Activated B cell treated with CpG ODN at 0.5 μM for 24 hours (primary cell): ENCODE measurements at regions of chr14 and their contacts with region 1.

Region 1: GRCh38 chr14:74612350-74613021 is 449 bp upstream of the LTBP2 start:
- DNase-seq: peak; percentile 95
- ATAC-seq: peak; percentile 89
- H3K4me3 Mint-ChIP-seq: peak overlapping the region; percentile 80
- H3K27ac Mint-ChIP-seq: no peak overlapping the region
- H3K4me1 Mint-ChIP-seq: peaks cover 42% of the 10 kb centered on the region
- H3K27me3 Mint-ChIP-seq: peaks cover 11% of the 10 kb centered on the region
- CTCF ChIP-seq: no peak

Region 2: DNA sequence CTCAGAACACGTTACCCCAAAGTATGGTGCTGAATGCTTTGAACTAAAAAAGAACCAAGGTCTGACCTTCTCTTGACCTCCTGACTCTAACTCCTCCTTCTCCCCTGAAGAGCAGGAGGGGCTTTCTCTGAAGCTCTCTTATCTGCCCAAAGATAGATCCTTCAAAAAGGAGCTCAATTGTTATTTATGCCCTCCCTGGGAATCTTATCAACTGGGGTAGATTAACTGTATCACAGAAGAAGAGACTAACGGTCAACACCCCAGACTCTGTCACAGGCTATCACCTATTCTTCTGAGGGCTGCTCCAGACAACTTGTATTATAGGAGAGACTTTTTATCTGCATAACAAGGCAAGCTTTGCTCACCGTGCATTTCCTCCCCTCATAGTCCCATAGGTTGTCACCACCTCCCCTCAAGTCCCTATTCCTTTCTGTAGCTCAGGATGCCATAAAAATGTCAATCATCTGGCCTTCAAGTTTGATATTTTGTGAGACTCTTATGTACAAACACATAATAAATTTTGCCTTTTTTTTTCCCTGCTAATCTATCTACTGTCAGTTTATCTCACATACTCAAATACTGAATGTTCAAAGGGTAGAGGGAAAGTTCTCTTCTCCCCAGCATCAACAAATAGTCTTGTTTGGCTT is 1288.5 kb before region 1 on chr14:
- CTCF ChIA-PET with region 1: no interaction called
- POLR2A ChIA-PET with region 1: no interaction called
- intact Hi-C with region 1: no loop called
- DNase-seq: no peak
- ATAC-seq: no peak
- H3K4me3 Mint-ChIP-seq: no peak overlapping the region
- H3K27ac Mint-ChIP-seq: no peak overlapping the region
- H3K4me1 Mint-ChIP-seq: peaks cover 17% of the 10 kb centered on the region
- H3K27me3 Mint-ChIP-seq: no peaks in the 10 kb centered on the region
- CTCF ChIP-seq: no peak

Region 3: DNA sequence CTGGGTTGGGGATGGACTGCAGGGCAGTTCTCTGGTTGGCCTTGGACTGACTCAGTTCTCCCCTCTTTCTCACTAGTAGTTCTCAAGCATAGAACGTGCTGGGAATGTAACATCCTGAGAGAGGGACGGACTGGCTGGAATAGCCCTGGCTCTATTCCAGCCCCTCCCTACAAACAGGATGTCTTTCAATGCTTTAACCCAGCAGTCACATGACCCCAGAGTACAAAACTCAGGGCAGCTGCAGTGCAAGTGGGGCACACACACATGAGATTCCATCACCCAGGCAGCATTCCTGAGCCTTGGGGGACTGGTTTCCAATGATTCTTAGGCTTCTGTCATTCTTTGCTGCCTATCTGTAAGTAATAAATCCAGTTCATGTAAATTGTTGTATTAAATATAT is 1001.8 kb before region 1 on chr14:
- CTCF ChIA-PET with region 1: no interaction called
- POLR2A ChIA-PET with region 1: no interaction called
- intact Hi-C with region 1: no loop called
- DNase-seq: no peak
- ATAC-seq: no peak
- H3K4me3 Mint-ChIP-seq: no peak overlapping the region
- H3K27ac Mint-ChIP-seq: no peak overlapping the region
- H3K4me1 Mint-ChIP-seq: peaks cover 3% of the 10 kb centered on the region
- H3K27me3 Mint-ChIP-seq: peaks cover 6% of the 10 kb centered on the region
- CTCF ChIP-seq: no peak

Region 4: GRCh38 chr14:74084277-74085046 is 528.0 kb before region 1 on chr14 and contains the starts of genes ALDH6A1 and LIN52:
- CTCF ChIA-PET with region 1: no interaction called
- POLR2A ChIA-PET with region 1: no interaction called
- intact Hi-C with region 1: loop called (anchors 10 kb)
- DNase-seq: peak; percentile 94
- ATAC-seq: peak; percentile 87
- H3K4me3 Mint-ChIP-seq: peak within 1 kb of the TSS; percentile 99
- H3K27ac Mint-ChIP-seq: peak within 1 kb of the TSS; percentile 93
- H3K4me1 Mint-ChIP-seq: peaks cover 37% of the 10 kb centered on the region
- H3K27me3 Mint-ChIP-seq: no peaks in the 10 kb centered on the region
- CTCF ChIP-seq: no peak
- total RNA-seq, gene ALDH6A1: 9.8 and 11.5 TPM in 2 replicates
- total RNA-seq, gene LIN52: 7.6 and 12.4 TPM in 2 replicates

Region 5: GRCh38 chr14:74257078-74257989 is 355.2 kb before region 1 on chr14:
- CTCF ChIA-PET with region 1: no interaction called
- POLR2A ChIA-PET with region 1: no interaction called
- intact Hi-C with region 1: no loop called
- DNase-seq: peak; percentile 63
- ATAC-seq: peak; percentile 97
- H3K4me3 Mint-ChIP-seq: peak overlapping the region; percentile 81
- H3K27ac Mint-ChIP-seq: no peak overlapping the region
- H3K4me1 Mint-ChIP-seq: peaks cover 12% of the 10 kb centered on the region
- H3K27me3 Mint-ChIP-seq: peaks cover 11% of the 10 kb centered on the region
- CTCF ChIP-seq: peak; percentile 70

Region 6: DNA sequence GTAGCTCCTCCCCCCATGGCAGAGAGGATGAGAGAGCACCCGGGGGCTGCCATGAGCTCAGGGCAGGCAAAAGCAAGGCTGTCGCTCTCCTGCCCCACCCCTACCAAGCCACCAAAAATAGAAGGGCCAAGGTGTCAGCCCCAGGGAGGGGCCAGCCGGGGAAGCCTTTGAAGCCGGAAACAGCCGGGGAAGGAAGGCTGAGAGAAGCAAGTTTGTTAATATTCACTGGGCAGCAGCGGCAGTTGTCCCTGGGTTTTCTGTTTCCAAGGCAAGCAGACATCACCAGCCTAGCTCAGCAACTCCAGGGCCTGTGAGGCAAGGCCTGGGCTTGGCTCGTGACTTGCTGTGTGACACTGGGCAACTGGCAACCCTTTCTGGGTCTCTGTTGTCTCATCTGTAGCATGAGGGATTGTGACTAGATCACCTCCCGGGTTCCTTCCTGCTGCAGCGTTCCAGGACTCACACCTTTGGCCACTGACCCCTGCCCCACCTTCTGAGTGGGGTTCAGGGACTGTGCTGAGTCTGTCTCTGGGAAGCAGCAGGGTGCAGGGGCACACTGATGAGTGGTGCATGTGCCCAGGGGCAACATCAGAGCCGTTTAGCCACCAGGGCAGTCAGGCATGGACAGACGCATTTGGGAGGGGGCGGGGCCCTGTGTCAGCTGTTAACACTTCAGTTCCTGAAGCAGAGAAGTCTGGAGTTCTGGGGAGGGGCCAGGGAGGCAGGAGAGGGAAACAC is 210.8 kb before region 1 on chr14:
- CTCF ChIA-PET with region 1: no interaction called
- POLR2A ChIA-PET with region 1: no interaction called
- intact Hi-C with region 1: loop called (anchors 5 kb)
- DNase-seq: peak; percentile 74
- ATAC-seq: peak; percentile 90
- H3K4me3 Mint-ChIP-seq: peak overlapping the region; percentile 87
- H3K27ac Mint-ChIP-seq: peak overlapping the region; percentile 98
- H3K4me1 Mint-ChIP-seq: peaks cover 54% of the 10 kb centered on the region
- H3K27me3 Mint-ChIP-seq: no peaks in the 10 kb centered on the region
- CTCF ChIP-seq: no peak

Region 7: GRCh38 chr14:74542056-74542685 is 70.3 kb before region 1 on chr14:
- CTCF ChIA-PET with region 1: no interaction called
- POLR2A ChIA-PET with region 1: no interaction called
- intact Hi-C with region 1: no loop called
- DNase-seq: no peak
- ATAC-seq: no peak
- H3K4me3 Mint-ChIP-seq: no peak overlapping the region
- H3K27ac Mint-ChIP-seq: no peak overlapping the region
- H3K4me1 Mint-ChIP-seq: no peaks in the 10 kb centered on the region
- H3K27me3 Mint-ChIP-seq: peaks cover 6% of the 10 kb centered on the region
- CTCF ChIP-seq: no peak

Region 8: DNA sequence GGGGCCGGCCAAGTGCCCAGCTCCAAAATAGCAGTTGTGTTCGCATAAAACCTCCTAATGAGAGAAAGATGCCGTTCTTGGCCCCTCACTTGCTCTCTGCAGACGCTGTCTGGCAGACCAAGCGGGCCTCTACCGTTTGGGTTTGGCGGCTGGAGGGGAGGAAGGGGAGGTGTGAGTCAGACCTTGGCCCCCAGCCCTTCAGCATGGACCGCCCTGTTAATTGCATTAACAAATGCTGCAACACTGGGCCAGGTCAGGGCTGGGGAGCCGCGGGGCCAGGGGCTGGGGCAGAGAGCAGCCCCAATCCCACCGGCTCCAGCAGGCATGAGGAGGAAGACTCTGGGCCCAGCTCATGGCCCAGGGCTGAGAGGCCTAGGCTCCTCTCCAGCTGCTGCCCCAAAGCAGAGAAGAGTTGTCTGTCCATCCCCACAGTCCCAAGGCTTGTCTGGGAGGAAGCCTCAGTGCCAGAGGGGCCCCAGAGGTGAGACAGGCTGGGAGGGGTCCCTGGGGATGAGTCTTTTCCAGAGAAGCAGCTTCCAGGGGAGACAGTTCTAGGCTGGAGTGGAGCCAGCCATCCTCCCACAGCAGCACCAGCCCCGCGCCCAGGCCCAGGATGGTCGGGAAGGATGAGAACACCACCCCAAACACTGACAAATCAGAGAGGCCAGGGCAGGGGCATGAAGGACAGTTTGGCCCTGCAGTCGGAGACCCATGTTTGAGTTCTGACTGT is 17.3 kb before region 1 on chr14:
- CTCF ChIA-PET with region 1: interaction called, 14 read pairs
- POLR2A ChIA-PET with region 1: no interaction called
- intact Hi-C with region 1: no loop called
- DNase-seq: no peak
- ATAC-seq: no peak
- H3K4me3 Mint-ChIP-seq: no peak overlapping the region
- H3K27ac Mint-ChIP-seq: no peak overlapping the region
- H3K4me1 Mint-ChIP-seq: peaks cover 29% of the 10 kb centered on the region
- H3K27me3 Mint-ChIP-seq: no peaks in the 10 kb centered on the region
- CTCF ChIP-seq: no peak

Region 9: GRCh38 chr14:74712499-74713394 is 100.3 kb after region 1 on chr14 and contains the starts of genes AREL1 and FCF1:
- CTCF ChIA-PET with region 1: no interaction called
- POLR2A ChIA-PET with region 1: interaction called, 5 read pairs
- intact Hi-C with region 1: loop called (anchors 1 kb)
- DNase-seq: peak; percentile 69
- ATAC-seq: peak; percentile 90
- H3K4me3 Mint-ChIP-seq: peak within 1 kb of the TSS; percentile 95
- H3K27ac Mint-ChIP-seq: peak within 1 kb of the TSS; percentile 92
- H3K4me1 Mint-ChIP-seq: peaks cover 49% of the 10 kb centered on the region
- H3K27me3 Mint-ChIP-seq: no peaks in the 10 kb centered on the region
- CTCF ChIP-seq: no peak
- total RNA-seq, gene AREL1: 46.5 and 49.7 TPM in 2 replicates
- total RNA-seq, gene FCF1: 49.4 and 49.5 TPM in 2 replicates

Region 10: GRCh38 chr14:74804219-74804826 is 191.8 kb after region 1 on chr14:
- CTCF ChIA-PET with region 1: interaction called, 31 read pairs
- POLR2A ChIA-PET with region 1: no interaction called
- intact Hi-C with region 1: loop called (anchors 1 kb)
- DNase-seq: no peak
- ATAC-seq: no peak
- H3K4me3 Mint-ChIP-seq: no peak overlapping the region
- H3K27ac Mint-ChIP-seq: no peak overlapping the region
- H3K4me1 Mint-ChIP-seq: no peaks in the 10 kb centered on the region
- H3K27me3 Mint-ChIP-seq: no peaks in the 10 kb centered on the region
- CTCF ChIP-seq: no peak

Region 11: DNA sequence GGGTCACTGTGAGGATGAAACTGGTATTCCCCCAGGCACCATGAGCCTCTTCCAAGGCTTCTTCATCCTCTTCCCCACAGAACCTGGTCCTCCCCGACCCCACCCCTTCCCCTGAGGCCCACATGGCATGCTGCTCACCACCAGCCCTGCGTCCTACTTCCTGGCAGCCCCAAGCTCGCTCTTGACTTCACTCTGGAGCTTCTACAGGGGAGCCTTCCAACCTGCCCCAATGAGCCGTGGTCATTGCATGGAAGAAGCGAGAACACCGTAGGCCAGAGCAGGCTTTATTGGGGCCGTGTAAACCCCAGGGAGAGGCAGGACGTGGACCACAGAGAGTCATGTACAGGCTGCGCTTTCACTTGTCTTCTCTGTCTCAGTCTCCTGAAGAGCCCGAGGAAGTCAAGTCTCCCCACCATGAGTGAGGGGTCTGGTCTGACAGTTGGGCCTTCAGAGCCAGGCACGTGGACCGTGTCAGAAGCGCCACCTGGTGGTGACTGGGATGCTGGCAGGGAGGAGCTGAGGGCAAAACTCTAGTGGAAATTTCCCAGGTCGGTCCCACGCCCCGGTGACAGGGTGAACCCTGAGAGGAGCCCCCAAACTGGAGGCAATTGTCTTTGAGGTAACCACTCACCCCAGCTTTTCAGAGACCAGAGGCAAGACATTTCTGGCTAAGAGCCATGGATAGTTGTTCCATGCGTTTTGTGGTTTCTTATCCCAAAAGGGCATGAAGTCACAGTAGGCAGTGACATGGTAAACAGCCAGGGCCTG is 293.1 kb after region 1 on chr14:
- CTCF ChIA-PET with region 1: interaction called, 11 read pairs
- POLR2A ChIA-PET with region 1: no interaction called
- intact Hi-C with region 1: loop called (anchors 1 kb)
- DNase-seq: peak; percentile 70
- ATAC-seq: peak; percentile 73
- H3K4me3 Mint-ChIP-seq: no peak overlapping the region
- H3K27ac Mint-ChIP-seq: peak overlapping the region; percentile 53
- H3K4me1 Mint-ChIP-seq: peaks cover 43% of the 10 kb centered on the region
- H3K27me3 Mint-ChIP-seq: no peaks in the 10 kb centered on the region
- CTCF ChIP-seq: peak; percentile 81